ENCODE measurements at regions of chr4 and their contacts with region 1.

Region 1: DNA sequence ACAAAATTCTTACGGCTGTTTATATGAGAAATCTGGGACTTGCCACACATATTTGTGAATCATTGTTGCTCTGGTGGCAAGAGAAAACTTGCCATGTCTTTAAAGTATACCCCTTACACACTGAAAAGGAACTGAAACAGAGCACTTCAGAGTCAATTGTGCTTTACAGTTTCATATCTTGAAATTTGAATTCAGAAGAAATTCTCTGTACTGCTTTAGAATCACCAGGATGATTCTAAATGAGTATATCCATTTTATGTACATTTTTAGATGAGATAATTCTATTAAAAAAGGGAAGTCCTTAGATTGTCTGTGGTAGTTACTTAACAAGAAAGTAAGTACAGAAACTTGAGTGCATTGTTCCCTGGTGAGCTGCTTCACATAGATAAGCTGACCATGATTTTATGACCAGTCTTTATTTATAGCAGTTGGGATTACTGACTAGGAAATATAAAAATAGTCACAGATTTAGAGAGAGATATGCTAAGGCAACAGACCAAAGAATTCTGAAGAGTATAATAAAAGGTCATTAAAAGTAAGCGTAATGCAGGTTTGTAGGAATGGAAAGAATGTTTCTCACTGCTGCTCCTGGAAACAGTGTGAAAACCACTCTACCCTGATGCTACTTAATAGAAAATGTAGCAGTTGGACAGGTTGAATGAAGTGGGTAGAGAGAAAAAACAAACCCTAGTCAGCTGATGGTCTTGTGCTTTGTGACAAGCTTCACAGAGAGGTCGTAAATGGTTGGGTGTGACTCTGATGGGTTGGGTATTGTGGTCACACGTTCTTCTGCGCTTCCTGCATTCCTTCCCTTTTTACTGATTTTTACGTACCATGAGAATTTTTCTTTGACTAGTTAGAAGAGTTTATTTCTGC is 41.0 kb downstream of the FNIP2 start:
- DNase-seq: no peak
- ATAC-seq: peak; percentile 74 to 83 (median 78)
- H3K4me3 ChIP-seq: peak overlapping the region; percentile 17
- H3K27ac ChIP-seq: peak overlapping the region; percentile 90
- H3K4me1 ChIP-seq: peaks cover 82% of the 10 kb centered on the region
- H3K27me3 ChIP-seq: no peaks in the 10 kb centered on the region
- CTCF ChIP-seq: no peak

Region 2: DNA sequence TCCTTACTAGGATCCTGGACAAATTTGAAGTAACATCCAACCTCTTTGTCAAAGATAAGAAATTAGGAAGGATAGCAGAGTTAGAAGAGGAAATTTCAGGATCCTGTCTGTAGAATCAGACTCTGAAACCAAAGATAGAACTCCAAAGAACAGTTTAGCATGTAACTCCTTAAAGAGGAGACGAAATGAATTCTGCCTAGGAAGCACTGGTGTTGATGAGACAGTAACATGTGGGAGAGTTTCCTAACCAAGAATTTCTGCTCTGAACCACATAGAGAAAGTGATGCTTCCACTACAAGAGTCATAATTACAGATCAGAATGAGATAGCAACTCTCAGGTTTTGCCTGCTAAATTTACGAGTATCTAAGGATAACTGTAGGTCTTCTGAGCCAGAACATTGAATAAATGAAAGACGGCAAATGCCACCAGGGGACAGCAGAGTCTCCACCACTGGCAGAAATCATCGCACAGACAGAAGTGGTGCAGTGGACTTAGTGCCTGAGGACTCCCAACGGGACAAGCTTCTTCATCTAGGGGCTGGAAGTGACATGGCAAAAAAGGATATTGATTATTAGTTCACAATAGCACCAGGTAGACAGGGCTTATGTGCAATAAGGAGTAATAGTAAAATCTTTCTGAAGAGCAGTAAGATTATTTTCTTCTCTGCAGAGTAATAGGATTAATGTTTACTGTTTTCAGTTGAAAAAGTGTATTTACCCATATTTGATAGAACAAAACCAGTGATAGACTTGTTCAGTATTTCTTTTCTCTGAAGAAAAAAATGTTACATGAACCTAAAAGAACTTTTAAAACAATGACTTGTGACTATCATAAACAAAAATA is 79.9 kb before region 1 on chr4:
- intact Hi-C with region 1: no loop called
- DNase-seq: peak; percentile 43 to 66
- ATAC-seq: peak; percentile 87 to 99 (median 94)
- H3K4me3 ChIP-seq: no peak overlapping the region
- H3K27ac ChIP-seq: no peak overlapping the region
- H3K4me1 ChIP-seq: no peaks in the 10 kb centered on the region
- H3K27me3 ChIP-seq: no peaks in the 10 kb centered on the region
- CTCF ChIP-seq: peak; percentile 86

Region 3: DNA sequence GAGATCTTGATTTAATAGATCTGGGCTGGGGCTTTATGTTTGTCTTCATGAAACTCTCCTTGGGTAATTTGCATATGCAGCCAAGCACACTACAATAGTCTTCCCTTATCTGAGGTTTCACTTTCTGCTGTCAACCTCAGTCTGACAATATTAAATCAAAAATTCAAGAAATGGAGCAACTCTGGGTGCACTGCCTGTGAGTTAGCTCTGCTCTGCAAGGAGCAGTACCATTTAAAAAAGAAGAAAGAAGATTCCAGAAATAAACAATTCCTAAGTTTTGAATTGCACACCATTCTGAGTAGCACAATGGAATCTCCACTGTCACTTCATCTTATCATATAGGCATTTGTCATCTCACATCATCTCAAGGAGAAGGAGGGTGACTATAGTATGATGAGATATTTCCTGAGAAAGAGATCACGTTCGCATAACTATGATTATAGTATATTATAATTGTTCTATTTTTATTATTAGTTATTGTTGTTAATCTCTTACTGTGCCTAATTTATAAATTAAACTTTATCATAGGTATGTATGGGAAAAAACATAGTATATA is 31.6 kb before region 1 on chr4:
- intact Hi-C with region 1: loop called (anchors 2 to 5 kb)
- DNase-seq: no peak
- ATAC-seq: peak in 1 of 4 donors; percentile 11
- H3K4me3 ChIP-seq: no peak overlapping the region
- H3K27ac ChIP-seq: peak overlapping the region; percentile 67
- H3K4me1 ChIP-seq: peaks cover 96% of the 10 kb centered on the region
- H3K27me3 ChIP-seq: no peaks in the 10 kb centered on the region
- CTCF ChIP-seq: no peak

Region 4: GRCh38 chr4:158966091-158966490 is 156.2 kb after region 1 on chr4:
- intact Hi-C with region 1: no loop called
- DNase-seq: no peak
- ATAC-seq: no peak
- H3K4me3 ChIP-seq: no peak overlapping the region
- H3K27ac ChIP-seq: no peak overlapping the region
- H3K4me1 ChIP-seq: no peaks in the 10 kb centered on the region
- H3K27me3 ChIP-seq: no peaks in the 10 kb centered on the region
- CTCF ChIP-seq: no peak